ENCODE measurements at regions of chr2 and their contacts with region 1.

Region 1: GRCh38 chr2:56444339-56444738 is 260.5 kb downstream of the CCDC85A start:
- DNase-seq: no peak
- ATAC-seq: no peak
- H3K4me3 ChIP-seq: no peak overlapping the region
- H3K27ac ChIP-seq: no peak overlapping the region
- H3K4me1 ChIP-seq: peaks cover 13% of the 10 kb centered on the region
- H3K27me3 ChIP-seq: no peaks in the 10 kb centered on the region
- CTCF ChIP-seq: no peak
- EP300 ChIP-seq: no peak
- POLR2A ChIP-seq: no peak
- RAD21 ChIP-seq: no peak

Region 2: DNA sequence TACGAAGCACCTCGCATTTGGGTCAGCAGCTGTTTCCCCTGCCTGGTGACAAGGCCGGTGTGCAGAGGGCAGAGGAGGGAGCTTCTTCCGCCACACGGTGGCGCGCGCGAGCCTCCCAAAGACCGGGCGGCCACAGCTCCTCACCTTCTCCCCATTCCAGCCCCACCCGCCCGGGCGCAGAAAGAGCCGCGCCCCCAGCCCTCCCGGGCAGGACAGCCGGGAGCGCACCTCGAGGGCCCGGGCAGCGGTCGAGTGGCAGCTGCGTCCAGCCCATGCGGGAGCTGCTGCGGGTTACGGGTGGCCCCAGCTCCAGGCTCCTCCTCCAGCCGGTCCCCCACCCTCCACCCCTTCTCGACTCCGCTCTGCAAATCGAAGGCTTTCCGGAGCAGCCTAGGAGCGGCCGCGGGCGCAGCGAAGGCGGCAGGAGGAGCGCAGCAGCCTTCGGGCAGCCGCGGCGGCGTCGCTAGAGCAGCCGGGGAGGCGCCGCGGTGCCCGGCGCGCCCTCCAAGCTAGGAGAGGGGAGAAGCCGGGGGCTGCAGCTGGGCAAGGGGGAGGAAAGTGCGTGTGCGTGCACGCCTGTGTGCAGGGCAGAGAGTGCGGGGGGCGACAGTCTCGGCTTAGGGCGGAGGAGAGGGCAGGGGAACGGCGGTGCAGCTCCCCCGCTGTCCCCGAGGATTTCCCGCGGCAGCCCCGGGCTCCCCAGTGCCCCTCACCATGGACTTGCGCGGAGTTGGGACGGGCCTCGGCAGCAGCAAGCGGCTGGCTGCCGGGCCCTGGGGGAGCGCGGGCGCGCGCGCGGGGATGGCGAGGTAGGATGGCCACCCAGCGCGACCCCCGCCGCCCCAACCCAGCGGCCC is 260.5 kb before region 1 on chr2 and contains the start of gene CCDC85A:
- CTCF ChIA-PET with region 1: no interaction called
- POLR2A ChIA-PET with region 1: no interaction called
- in situ Hi-C with region 1: no loop called
- intact Hi-C with region 1: no loop called
- DNase-seq: peak; percentile 46
- ATAC-seq: peak; percentile 99
- H3K4me3 ChIP-seq: peak within 1 kb of the TSS; percentile 17 to 70 (median 47); a peak in 4 of 6 replicates
- H3K27ac ChIP-seq: no peak within 1 kb of the TSS
- H3K4me1 ChIP-seq: 0 out of 2 replicates have a peak, but pooled peaks cover 5% of the 10 kb centered on the region
- H3K27me3 ChIP-seq: peaks cover 11 to 48% of the 10 kb centered on the region in 2 experiments
- CTCF ChIP-seq: peak; percentile 97
- EP300 ChIP-seq: no peak
- POLR2A ChIP-seq: no peak
- RAD21 ChIP-seq: peak; percentile 93
- total RNA-seq, gene CCDC85A: not detected in 2 replicates

Region 3: DNA sequence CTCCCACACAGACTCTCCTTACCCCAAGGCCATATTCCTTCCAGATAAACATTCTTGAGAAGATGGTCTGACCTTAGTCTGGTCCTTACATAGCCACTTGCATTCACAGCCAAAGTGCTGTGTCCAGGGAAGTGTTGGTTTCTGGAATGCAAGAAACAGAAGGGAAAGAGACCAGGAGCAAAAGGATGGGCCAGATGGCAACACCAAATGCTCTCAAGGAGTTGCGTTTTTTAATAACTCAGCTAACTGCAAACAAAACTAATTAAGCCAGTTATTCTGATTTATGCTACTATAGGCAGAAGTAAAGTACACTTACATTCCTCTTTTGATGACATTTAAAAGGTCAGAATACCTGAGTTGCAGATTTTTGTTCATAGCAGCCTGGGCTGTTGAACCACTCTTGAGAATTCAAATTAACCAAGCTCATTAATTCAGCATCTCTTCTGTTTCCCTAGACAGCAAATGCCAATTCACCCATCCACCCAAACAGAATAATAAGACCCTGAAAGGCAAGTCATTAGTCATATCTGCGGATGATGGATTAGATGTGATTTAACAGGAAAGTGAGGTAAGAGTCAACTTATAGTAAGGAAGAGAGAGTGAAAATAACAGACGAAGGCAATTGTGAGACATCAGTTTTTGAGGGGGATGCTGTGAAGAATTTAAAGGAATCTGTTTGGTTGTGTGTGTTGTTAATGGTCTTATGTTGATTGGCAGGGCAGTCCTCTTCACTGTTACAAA is 241.8 kb before region 1 on chr2:
- CTCF ChIA-PET with region 1: no interaction called
- POLR2A ChIA-PET with region 1: no interaction called
- in situ Hi-C with region 1: no loop called
- intact Hi-C with region 1: loop called (anchors 10 kb)
- DNase-seq: no peak
- ATAC-seq: no peak
- H3K4me3 ChIP-seq: no peak overlapping the region
- H3K27ac ChIP-seq: no peak overlapping the region
- H3K4me1 ChIP-seq: peaks cover 24% of the 10 kb centered on the region
- H3K27me3 ChIP-seq: no peaks in the 10 kb centered on the region
- CTCF ChIP-seq: no peak
- EP300 ChIP-seq: no peak
- POLR2A ChIP-seq: no peak
- RAD21 ChIP-seq: no peak

Region 4: DNA sequence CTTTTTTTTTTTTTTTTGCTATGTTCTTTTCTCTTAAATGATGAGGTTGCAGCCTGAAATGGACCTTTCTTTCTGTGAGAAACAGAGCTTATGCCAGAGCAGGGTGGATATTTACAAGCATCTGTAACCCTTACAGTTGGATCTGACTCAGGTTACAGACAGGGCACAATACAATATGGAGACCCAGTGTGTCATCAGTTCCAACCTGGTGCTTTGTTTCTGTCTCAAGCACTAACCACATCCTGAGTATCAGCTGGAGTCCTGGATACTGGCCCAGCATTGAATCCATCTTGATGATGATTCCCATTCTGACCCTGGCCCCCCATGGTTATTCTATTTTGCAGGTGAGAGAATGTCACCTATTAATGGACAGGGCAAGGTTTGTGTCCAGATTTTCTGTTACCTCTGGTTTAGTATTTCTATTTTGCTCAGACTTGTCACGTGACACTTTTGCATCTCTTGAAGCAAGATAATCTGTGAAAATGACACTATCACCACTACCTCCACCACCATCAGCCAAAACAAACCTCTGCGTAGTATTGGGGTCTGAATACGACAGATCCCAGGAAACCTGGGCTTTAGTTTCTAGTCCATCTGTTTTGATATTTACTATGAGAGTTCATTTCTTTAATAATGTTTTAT is 86.6 kb before region 1 on chr2:
- CTCF ChIA-PET with region 1: no interaction called
- POLR2A ChIA-PET with region 1: no interaction called
- in situ Hi-C with region 1: no loop called
- intact Hi-C with region 1: no loop called
- DNase-seq: no peak
- ATAC-seq: no peak
- H3K4me3 ChIP-seq: no peak overlapping the region
- H3K27ac ChIP-seq: no peak overlapping the region
- H3K4me1 ChIP-seq: no peaks in the 10 kb centered on the region
- H3K27me3 ChIP-seq: no peaks in the 10 kb centered on the region
- CTCF ChIP-seq: no peak
- EP300 ChIP-seq: no peak
- POLR2A ChIP-seq: no peak
- RAD21 ChIP-seq: no peak

Region 5: DNA sequence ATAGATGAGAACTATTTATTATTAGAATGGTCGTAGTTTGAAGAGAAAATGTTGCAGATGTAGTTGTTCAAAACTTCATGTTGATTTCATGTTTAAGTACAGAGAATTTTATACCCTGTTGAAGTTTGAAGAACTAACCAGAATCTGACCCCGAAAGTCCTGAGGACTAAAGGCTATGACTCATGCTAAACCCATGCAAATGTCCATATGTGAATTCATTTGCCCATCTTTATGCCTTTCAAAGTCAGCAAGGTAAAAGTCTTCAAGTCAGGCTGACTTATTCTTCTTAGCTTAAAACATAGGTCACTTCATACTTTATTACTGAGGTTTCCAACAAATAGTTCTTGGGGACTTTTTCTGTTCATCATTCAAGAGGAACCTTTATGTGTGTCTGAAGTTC is 75.0 kb before region 1 on chr2:
- CTCF ChIA-PET with region 1: no interaction called
- POLR2A ChIA-PET with region 1: no interaction called
- in situ Hi-C with region 1: no loop called
- intact Hi-C with region 1: loop called (anchors 2 kb)
- DNase-seq: no peak
- ATAC-seq: no peak
- H3K4me3 ChIP-seq: no peak overlapping the region
- H3K27ac ChIP-seq: no peak overlapping the region
- H3K4me1 ChIP-seq: no peaks in the 10 kb centered on the region
- H3K27me3 ChIP-seq: no peaks in the 10 kb centered on the region
- CTCF ChIP-seq: no peak
- EP300 ChIP-seq: no peak
- POLR2A ChIP-seq: no peak
- RAD21 ChIP-seq: no peak

Region 6: DNA sequence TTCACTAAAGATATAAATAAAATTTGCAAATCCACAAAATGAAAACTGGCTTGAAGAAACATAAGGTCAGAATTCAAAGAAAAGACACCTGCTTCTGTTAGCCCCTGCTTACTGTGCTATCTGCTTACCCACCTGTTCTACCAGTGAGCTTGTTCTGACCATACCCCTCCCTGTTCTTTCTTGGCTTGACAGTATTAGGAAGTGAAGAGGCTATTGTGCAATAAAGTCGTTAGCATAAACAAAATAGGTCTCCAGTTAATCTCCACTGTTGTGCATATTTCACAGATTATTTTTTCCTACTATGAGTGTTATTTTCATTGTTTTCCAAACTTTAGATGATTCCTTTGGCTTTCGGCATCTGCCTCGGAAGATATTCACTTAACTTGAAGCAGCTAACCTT is 61.5 kb after region 1 on chr2:
- CTCF ChIA-PET with region 1: no interaction called
- POLR2A ChIA-PET with region 1: no interaction called
- in situ Hi-C with region 1: no loop called
- intact Hi-C with region 1: no loop called
- DNase-seq: no peak
- ATAC-seq: no peak
- H3K4me3 ChIP-seq: no peak overlapping the region
- H3K27ac ChIP-seq: no peak overlapping the region
- H3K4me1 ChIP-seq: no peaks in the 10 kb centered on the region
- H3K27me3 ChIP-seq: no peaks in the 10 kb centered on the region
- CTCF ChIP-seq: no peak
- EP300 ChIP-seq: no peak
- POLR2A ChIP-seq: no peak
- RAD21 ChIP-seq: no peak

Measured in HepG2 (cell line).